H1 (cell line): ENCODE measurements at regions of chr18 and their contacts with region 1.

Region 1: GRCh38 chr18:37508207-37508606 is 57.4 kb downstream of the CELF4 start:
- DNase-seq: no peak
- H3K4me3 ChIP-seq: no peak overlapping the region
- H3K27ac ChIP-seq: no peak overlapping the region
- H3K4me1 ChIP-seq: no peaks in the 10 kb centered on the region
- H3K27me3 ChIP-seq: no peaks in the 10 kb centered on the region
- CTCF ChIP-seq: no peak
- EP300 ChIP-seq: no peak
- POLR2A ChIP-seq: no peak
- RAD21 ChIP-seq: no peak

Region 2: GRCh38 chr18:37493352-37493935 is 14.8 kb before region 1 on chr18:
- CTCF ChIA-PET with region 1: interaction called, 46 read pairs
- POLR2A ChIA-PET with region 1: interaction called, 3 read pairs
- DNase-seq: no peak
- H3K4me3 ChIP-seq: no peak overlapping the region
- H3K27ac ChIP-seq: no peak overlapping the region
- H3K4me1 ChIP-seq: peaks cover 0 to 29% (median 11%) of the 10 kb centered on the region in 4 experiments; a peak in 6 of 7 replicates
- H3K27me3 ChIP-seq: peaks cover 0 to 3% (median 0%) of the 10 kb centered on the region in 4 experiments; a peak in 4 of 7 replicates
- CTCF ChIP-seq: peak in 1 of 3 experiments; percentile 19; a peak in 1 of 4 replicates
- EP300 ChIP-seq: no peak
- POLR2A ChIP-seq: no peak
- RAD21 ChIP-seq: peak; percentile 11 to 31; a peak in 1 of 4 replicates